Naive thymus-derived CD4-positive, alpha-beta T cell (primary cell): ENCODE measurements at regions of chr6 and their contacts with region 1.

Region 1: DNA sequence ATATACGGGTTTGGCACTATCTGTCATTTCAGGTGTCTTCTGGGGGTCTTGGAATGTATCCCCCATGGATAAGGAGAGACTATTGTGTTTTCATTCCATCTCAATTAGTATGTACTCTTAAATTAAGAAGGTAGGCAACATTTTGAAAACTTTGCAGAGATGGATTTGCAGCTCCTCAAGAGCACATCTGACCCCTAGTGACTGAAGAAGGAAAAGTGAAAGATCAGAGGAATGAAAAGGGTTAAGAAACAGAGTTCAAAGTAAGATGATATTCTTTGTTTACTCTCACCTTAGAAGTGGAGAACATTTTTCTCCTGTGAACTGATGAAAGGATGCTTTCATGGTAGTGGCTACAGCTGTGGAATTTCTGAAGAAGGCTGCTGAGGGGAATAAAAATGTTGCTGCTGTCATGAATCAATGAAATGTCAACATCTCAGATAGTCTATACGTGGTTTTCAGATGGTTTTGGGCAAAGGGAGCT is 41.5 kb downstream of the SH3BGRL2 start:
- DNase-seq: peak in 5 of 9 donors; percentile 8 to 54 (median 45)
- ATAC-seq: peak; percentile 47
- H3K4me3 ChIP-seq: no peak overlapping the region
- H3K4me3 Mint-ChIP-seq: peak overlapping the region in 2 of 10 donors; percentile 60 to 65
- H3K27ac ChIP-seq: no peak overlapping the region
- H3K27ac Mint-ChIP-seq: peak overlapping the region in 7 of 9 donors; percentile 10 to 83 (median 56)
- H3K4me1 ChIP-seq: peaks cover 0 to 31% of the 10 kb centered on the region in 2 donors
- H3K4me1 Mint-ChIP-seq: peaks cover 16 to 53% (median 43%) of the 10 kb centered on the region in 7 donors
- H3K27me3 ChIP-seq: no peaks in the 10 kb centered on the region
- H3K27me3 Mint-ChIP-seq: no peaks in the 10 kb centered on the region

Region 2: GRCh38 chr6:78867370-78868040 is 805.2 kb before region 1 on chr6 and contains the start of gene IRAK1BP1:
- CTCF ChIA-PET with region 1: no interaction called
- POLR2A ChIA-PET with region 1: no interaction called
- intact Hi-C with region 1: loop called in 1 of 2 experiments (anchors 1 kb)
- DNase-seq: peak; percentile 39 to 79 (median 76)
- ATAC-seq: peak; percentile 94
- H3K4me3 ChIP-seq: peak within 1 kb of the TSS; percentile 85
- H3K4me3 Mint-ChIP-seq: peak within 1 kb of the TSS; percentile 91 to 100 (median 98)
- H3K27ac ChIP-seq: peak within 1 kb of the TSS; percentile 68
- H3K27ac Mint-ChIP-seq: peak within 1 kb of the TSS; percentile 87 to 97 (median 96)
- H3K4me1 ChIP-seq: peaks cover 0 to 5% of the 10 kb centered on the region in 2 donors
- H3K4me1 Mint-ChIP-seq: peaks cover 6 to 33% (median 27%) of the 10 kb centered on the region in 7 donors
- H3K27me3 ChIP-seq: no peaks in the 10 kb centered on the region
- H3K27me3 Mint-ChIP-seq: no peaks in the 10 kb centered on the region
- total RNA-seq, gene IRAK1BP1: 0.71 to 3.6 (median 3.1) TPM

Region 3: GRCh38 chr6:79233611-79234149 is 439.0 kb before region 1 on chr6:
- CTCF ChIA-PET with region 1: no interaction called
- POLR2A ChIA-PET with region 1: no interaction called
- intact Hi-C with region 1: loop called in 1 of 2 experiments (anchors 2 kb)
- DNase-seq: peak; percentile 34 to 77 (median 54)
- ATAC-seq: peak; percentile 63
- H3K4me3 ChIP-seq: peak overlapping the region; percentile 89
- H3K4me3 Mint-ChIP-seq: peak overlapping the region; percentile 92 to 100 (median 98)
- H3K27ac ChIP-seq: peak overlapping the region; percentile 62
- H3K27ac Mint-ChIP-seq: peak overlapping the region; percentile 64 to 96 (median 90)
- H3K4me1 ChIP-seq: peaks cover 4 to 8% of the 10 kb centered on the region in 2 donors
- H3K4me1 Mint-ChIP-seq: peaks cover 9 to 42% (median 30%) of the 10 kb centered on the region in 7 donors
- H3K27me3 ChIP-seq: no peaks in the 10 kb centered on the region
- H3K27me3 Mint-ChIP-seq: no peaks in the 10 kb centered on the region

Region 4: GRCh38 chr6:79570129-79571029 is 102.3 kb before region 1 on chr6:
- CTCF ChIA-PET with region 1: interaction called, 19 read pairs
- POLR2A ChIA-PET with region 1: no interaction called
- intact Hi-C with region 1: loop called (anchors 1 kb)
- DNase-seq: peak in 6 of 9 donors; percentile 17 to 52 (median 44)
- ATAC-seq: peak; percentile 60
- H3K4me3 ChIP-seq: no peak overlapping the region
- H3K4me3 Mint-ChIP-seq: peak overlapping the region in 5 of 10 donors; percentile 2 to 61 (median 51)
- H3K27ac ChIP-seq: no peak overlapping the region
- H3K27ac Mint-ChIP-seq: no peak overlapping the region
- H3K4me1 ChIP-seq: no peaks in the 10 kb centered on the region
- H3K4me1 Mint-ChIP-seq: peaks cover 0 to 5% (median 0%) of the 10 kb centered on the region in 7 donors
- H3K27me3 ChIP-seq: no peaks in the 10 kb centered on the region
- H3K27me3 Mint-ChIP-seq: peaks cover 0 to 5% (median 0%) of the 10 kb centered on the region in 5 donors

Region 5: DNA sequence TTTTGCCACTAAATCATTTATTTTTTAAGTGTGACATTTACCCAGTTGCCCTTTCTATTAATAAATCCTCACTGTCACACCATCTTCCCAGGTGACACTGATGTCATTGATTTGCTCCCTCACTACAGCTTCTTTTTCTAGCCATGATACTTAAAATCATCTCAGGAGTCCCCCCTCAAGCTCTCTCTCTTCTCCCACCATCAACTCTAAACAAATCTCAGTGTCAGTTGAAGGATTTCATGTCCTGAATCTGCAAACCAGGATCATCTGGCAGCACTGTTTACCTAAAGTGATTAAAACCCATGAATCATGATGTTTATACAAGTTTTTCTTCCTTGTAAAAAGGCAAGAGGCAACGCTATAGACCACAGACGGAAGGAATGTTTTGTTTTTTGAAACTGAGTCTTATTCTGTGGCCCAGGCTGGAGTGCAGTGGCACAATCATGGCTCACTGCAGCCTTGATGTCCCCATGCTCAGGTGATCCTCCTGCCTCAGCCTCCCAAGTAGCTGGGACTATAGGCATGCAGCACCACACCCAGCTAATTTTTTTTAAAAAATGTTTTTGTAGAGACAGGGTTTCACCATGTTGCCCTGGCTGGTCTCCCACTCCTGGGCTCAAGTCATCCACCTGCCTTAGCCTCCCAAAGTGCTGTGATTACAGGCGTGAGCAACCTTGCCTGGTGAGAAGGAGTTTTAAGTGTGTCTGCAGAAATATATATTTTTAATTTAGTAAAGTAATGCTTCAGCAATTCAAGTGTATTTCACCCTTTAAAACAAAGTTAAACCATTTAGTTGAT is 71.7 kb before region 1 on chr6:
- CTCF ChIA-PET with region 1: no interaction called
- POLR2A ChIA-PET with region 1: no interaction called
- intact Hi-C with region 1: no loop called
- DNase-seq: no peak
- ATAC-seq: no peak
- H3K4me3 ChIP-seq: no peak overlapping the region
- H3K4me3 Mint-ChIP-seq: no peak overlapping the region
- H3K27ac ChIP-seq: no peak overlapping the region
- H3K27ac Mint-ChIP-seq: no peak overlapping the region
- H3K4me1 ChIP-seq: no peaks in the 10 kb centered on the region
- H3K4me1 Mint-ChIP-seq: peaks cover 0 to 5% (median 0%) of the 10 kb centered on the region in 7 donors
- H3K27me3 ChIP-seq: no peaks in the 10 kb centered on the region
- H3K27me3 Mint-ChIP-seq: no peaks in the 10 kb centered on the region

Region 6: DNA sequence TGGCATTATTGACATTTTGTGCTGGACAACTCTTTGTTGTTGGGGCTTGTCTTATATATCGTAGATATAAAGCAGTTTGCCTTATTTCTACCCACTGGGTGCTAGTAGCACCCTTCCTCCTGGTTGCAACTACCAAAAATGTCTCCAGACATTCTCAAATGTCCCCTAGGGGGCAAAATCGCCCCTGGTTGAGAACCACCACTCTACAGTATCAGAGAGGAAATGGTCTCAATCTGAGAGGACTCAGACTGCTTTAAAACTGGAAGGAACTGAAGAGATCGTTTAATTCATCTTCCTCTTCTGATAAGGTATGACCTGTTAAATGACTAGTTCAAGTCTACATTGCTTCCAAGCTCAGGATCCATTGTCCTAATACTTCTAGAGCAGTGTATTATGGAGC is 26.7 kb before region 1 on chr6:
- CTCF ChIA-PET with region 1: interaction called, 21 read pairs
- POLR2A ChIA-PET with region 1: interaction called, 4 read pairs
- intact Hi-C with region 1: loop called in 1 of 2 experiments (anchors 1 kb)
- DNase-seq: peak in 5 of 9 donors; percentile 31 to 50 (median 42)
- ATAC-seq: peak; percentile 70
- H3K4me3 ChIP-seq: no peak overlapping the region
- H3K4me3 Mint-ChIP-seq: peak overlapping the region in 1 of 10 donors; percentile 36
- H3K27ac ChIP-seq: no peak overlapping the region
- H3K27ac Mint-ChIP-seq: peak overlapping the region in 1 of 9 donors; percentile 41
- H3K4me1 ChIP-seq: no peaks in the 10 kb centered on the region
- H3K4me1 Mint-ChIP-seq: peaks cover 0 to 35% (median 15%) of the 10 kb centered on the region in 7 donors
- H3K27me3 ChIP-seq: no peaks in the 10 kb centered on the region
- H3K27me3 Mint-ChIP-seq: peaks cover 5 to 16% (median 10%) of the 10 kb centered on the region in 5 donors

Region 7: GRCh38 chr6:79694625-79695343 is 22.1 kb after region 1 on chr6:
- CTCF ChIA-PET with region 1: no interaction called
- POLR2A ChIA-PET with region 1: no interaction called
- intact Hi-C with region 1: no loop called
- DNase-seq: no peak
- ATAC-seq: no peak
- H3K4me3 ChIP-seq: no peak overlapping the region
- H3K4me3 Mint-ChIP-seq: no peak overlapping the region
- H3K27ac ChIP-seq: no peak overlapping the region
- H3K27ac Mint-ChIP-seq: no peak overlapping the region
- H3K4me1 ChIP-seq: no peaks in the 10 kb centered on the region
- H3K4me1 Mint-ChIP-seq: no peaks in the 10 kb centered on the region
- H3K27me3 ChIP-seq: no peaks in the 10 kb centered on the region
- H3K27me3 Mint-ChIP-seq: no peaks in the 10 kb centered on the region